ENCODE measurements at regions of chr9 and their contacts with region 1.

Region 1: GRCh38 chr9:32378993-32379729 is 5.3 kb upstream of the ACO1 start:
- DNase-seq: peak; percentile 32
- H3K4me3 Mint-ChIP-seq: no peak overlapping the region
- H3K27ac Mint-ChIP-seq: no peak overlapping the region
- H3K4me1 Mint-ChIP-seq: peaks cover 15% of the 10 kb centered on the region
- H3K27me3 Mint-ChIP-seq: peaks cover 30% of the 10 kb centered on the region

Region 2: DNA sequence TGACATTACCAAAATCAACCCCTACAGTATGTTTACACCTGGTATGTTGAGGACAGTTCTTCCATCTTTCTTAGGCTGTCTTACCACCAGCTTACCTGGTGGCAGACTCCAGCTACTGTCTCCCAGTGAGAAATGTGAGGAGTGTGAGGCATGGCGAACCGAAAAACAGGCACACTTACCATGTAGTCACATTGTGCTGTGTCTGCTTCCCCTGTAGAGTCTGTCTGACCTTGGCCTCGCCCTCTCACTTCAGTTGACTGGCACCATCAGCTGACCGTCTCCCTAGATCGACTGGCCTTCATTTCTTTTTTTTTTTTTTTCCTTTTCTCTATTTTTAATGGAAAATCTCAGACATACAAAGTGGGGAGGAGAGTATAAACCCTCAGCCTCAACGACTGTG is 10.2 kb after region 1 on chr9:
- intact Hi-C with region 1: no loop called
- DNase-seq: no peak
- H3K4me3 Mint-ChIP-seq: no peak overlapping the region
- H3K27ac Mint-ChIP-seq: no peak overlapping the region
- H3K4me1 Mint-ChIP-seq: peaks cover 12% of the 10 kb centered on the region
- H3K27me3 Mint-ChIP-seq: no peaks in the 10 kb centered on the region

Region 3: DNA sequence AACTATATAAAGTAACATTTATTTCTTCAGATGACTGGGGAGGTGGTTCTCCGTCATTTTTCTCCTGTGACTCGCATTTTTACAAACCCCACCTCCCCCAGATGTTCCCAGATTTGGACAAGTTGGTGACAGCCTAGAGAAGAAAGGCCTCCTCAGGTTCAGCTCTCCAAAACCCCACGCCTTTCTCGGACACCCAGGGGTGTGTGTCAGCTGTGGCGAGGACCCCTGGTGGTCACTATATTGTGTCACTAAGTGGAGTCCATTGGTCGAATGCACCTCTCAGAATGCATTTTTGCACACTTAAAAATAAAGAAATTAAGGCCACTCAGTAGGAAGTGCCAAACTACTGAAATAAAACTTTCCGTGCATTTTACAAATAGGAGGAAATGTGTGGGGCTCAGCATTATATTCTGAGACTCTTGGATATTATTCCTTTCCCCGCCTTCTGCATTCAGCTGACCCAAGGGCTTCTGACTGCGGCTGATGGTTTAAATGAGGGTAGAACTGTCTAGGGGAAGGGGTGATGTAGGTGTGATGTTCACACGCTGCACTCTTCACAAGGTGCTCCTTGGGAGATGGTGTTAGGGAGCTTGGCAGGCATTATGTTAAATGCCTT is 52.9 kb after region 1 on chr9:
- intact Hi-C with region 1: loop called (anchors 1 kb)
- DNase-seq: no peak
- H3K4me3 Mint-ChIP-seq: no peak overlapping the region
- H3K27ac Mint-ChIP-seq: no peak overlapping the region
- H3K4me1 Mint-ChIP-seq: peaks cover 4% of the 10 kb centered on the region
- H3K27me3 Mint-ChIP-seq: no peaks in the 10 kb centered on the region

Region 4: GRCh38 chr9:32526041-32526706 is 147.0 kb after region 1 on chr9 and contains the start of gene RIGI:
- intact Hi-C with region 1: loop called (anchors 1 kb)
- DNase-seq: peak; percentile 73
- H3K4me3 Mint-ChIP-seq: peak within 1 kb of the TSS; percentile 89
- H3K27ac Mint-ChIP-seq: peak within 1 kb of the TSS; percentile 76
- H3K4me1 Mint-ChIP-seq: peaks cover 31% of the 10 kb centered on the region
- H3K27me3 Mint-ChIP-seq: no peaks in the 10 kb centered on the region
- total RNA-seq, gene RIGI: 4.8 and 5.0 TPM in 2 replicates

Region 5: DNA sequence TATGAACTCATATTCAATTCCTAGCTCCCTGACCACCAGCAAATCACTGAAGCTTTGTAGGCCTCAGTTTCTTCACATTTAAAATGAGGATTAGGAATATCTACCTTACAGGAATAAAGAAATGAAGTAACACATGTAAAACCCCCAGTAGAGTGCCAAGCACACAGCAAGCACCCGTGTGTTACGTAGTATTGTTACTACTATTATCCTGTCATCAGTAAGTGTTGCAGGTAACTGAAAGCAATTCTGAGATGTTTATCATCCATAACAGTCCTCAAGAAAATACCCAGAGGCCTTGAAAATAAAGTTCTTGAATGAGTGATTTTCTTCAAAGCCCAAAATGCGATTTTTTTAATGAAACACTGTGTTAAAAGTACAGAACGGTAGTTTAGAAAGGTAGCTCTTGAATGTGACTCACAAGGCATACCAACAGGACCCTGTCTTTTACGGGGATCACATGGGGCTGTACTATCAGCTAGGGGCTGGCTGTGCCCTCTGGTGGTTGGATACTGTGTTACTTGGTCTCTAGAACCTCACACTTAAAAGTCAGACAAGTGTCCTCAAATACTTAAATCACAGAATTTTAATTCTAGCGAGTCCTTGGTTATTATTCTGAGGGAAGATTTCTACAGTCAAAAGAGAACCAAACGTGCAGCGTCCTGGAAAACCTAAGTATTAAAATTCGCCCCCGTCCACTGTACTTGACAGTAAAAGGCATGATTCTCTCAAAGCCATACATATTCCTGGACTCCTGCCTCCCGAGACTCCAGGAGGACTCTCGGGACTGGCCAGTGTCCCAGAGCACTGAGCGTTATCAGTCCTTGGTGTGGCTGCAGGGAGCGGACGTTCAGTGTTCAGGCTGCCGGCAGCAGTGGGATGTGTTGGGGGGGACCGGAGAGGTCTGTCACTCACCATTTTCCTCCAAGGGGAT is 193.1 kb after region 1 on chr9:
- intact Hi-C with region 1: loop called (anchors 1 kb)
- DNase-seq: peak; percentile 64
- H3K4me3 Mint-ChIP-seq: peak overlapping the region; percentile 97
- H3K27ac Mint-ChIP-seq: peak overlapping the region; percentile 97
- H3K4me1 Mint-ChIP-seq: peaks cover 23% of the 10 kb centered on the region
- H3K27me3 Mint-ChIP-seq: peaks cover 4% of the 10 kb centered on the region

Region 6: DNA sequence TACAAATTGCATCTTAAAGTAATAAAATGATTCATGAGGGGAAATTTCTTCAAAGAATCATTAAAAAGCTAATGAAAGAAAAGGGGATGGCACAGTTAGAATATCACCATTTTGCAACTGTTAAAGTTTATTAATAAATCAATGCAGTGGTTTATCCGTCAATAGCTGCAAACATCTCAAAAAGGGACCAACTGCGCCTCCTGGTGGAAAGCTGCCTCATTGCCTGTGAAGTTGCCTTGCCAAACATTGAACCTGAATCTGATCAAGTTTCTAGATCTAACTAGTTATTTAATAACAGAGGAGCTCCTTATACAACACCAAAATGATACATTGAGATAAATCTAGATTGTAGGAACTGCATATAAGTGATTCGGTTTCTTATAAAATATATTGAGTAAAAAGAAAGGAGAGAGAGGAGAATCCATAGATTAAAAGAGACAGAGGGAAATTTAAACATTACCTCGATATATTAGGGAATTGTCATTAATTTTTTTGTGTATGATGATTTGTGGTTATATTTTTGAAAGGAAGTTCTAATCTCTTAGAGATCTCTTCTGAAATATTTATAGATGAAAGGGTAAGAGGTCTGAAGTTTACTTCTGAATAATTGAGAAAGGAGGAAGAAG is 200.7 kb after region 1 on chr9:
- intact Hi-C with region 1: loop called (anchors 1 kb)
- DNase-seq: peak; percentile 53
- H3K4me3 Mint-ChIP-seq: no peak overlapping the region
- H3K27ac Mint-ChIP-seq: no peak overlapping the region
- H3K4me1 Mint-ChIP-seq: peaks cover 7% of the 10 kb centered on the region
- H3K27me3 Mint-ChIP-seq: peaks cover 23% of the 10 kb centered on the region

Region 7: DNA sequence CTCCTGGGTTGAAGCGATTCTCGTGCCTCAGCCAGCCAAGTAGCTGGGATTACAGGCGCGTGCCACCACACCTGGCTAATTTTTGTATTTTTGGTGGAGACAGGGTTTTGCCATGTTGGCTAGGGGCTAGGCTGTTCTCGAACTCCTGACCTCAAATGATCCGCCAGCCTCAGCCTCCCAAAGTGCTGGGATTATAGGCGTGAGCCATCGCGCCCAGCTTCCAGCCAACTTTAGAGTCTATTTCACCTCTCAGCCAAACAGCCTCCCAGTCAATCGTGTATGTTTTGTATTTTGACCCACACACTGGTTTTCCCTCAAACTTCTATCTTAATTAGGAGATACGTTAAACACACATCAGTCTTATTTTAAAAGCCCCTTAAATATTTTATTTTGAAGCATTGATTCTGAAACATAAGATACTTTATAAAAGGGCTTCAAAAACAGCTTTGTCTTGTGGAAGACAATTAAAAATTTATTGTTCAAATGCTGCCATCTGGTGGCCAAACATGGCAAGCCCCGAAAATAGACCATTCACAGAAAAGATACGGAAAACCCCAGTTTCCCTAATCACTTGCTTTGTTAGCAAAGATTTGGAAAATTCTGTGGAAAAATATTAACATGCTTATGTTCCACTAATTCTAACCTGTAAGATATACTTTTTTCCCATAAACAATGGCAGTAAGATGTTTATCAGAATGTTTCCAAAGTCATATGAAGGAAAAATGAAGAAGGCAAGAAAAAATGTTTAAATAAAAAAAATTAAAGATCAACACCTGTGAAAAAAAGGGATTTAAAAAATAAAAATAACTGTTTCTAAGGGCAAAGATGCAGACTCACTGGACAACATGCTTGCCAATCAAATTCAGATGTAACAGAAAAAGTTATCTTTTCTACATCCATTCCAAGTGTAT is 589.2 kb after region 1 on chr9:
- intact Hi-C with region 1: loop called (anchors 1 kb)
- DNase-seq: no peak
- H3K4me3 Mint-ChIP-seq: no peak overlapping the region
- H3K27ac Mint-ChIP-seq: no peak overlapping the region
- H3K4me1 Mint-ChIP-seq: peaks cover 2% of the 10 kb centered on the region
- H3K27me3 Mint-ChIP-seq: no peaks in the 10 kb centered on the region

Measured in activated T-helper 2 cell treated with anti-CD3 and anti-CD28 coated beads, Interferon-gamma antibody, Interleukin-2, Interleukin-4, amounts not matched to agents 10 μg/mL and 5 μg/mL and 100 μg/mL, durations not matched to agents 14 hours and 24 hours and 36 hours (primary cell).